Activated CD8-positive, alpha-beta memory T cell treated with anti-CD3 and anti-CD28 coated beads, Interleukin-2, amount 10 ng/mL, durations not matched to agents 7 days and 5 days (primary cell): ENCODE measurements at regions of chr12 and their contacts with region 1.

Region 1: GRCh38 chr12:93502802-93503623 is 35.7 kb downstream of the MRPL42 start:
- DNase-seq: peak; percentile 71
- ATAC-seq: peak; percentile 42
- H3K4me3 Mint-ChIP-seq: no peak overlapping the region
- H3K27ac Mint-ChIP-seq: no peak overlapping the region
- H3K4me1 Mint-ChIP-seq: peaks cover 17% of the 10 kb centered on the region
- H3K27me3 Mint-ChIP-seq: no peaks in the 10 kb centered on the region

Region 2: GRCh38 chr12:93638095-93638494 is 135.1 kb after region 1 on chr12:
- CTCF ChIA-PET with region 1: no interaction called
- DNase-seq: no peak
- ATAC-seq: no peak
- H3K4me3 Mint-ChIP-seq: no peak overlapping the region
- H3K27ac Mint-ChIP-seq: no peak overlapping the region
- H3K4me1 Mint-ChIP-seq: no peaks in the 10 kb centered on the region
- H3K27me3 Mint-ChIP-seq: peaks cover 33% of the 10 kb centered on the region

Region 3: DNA sequence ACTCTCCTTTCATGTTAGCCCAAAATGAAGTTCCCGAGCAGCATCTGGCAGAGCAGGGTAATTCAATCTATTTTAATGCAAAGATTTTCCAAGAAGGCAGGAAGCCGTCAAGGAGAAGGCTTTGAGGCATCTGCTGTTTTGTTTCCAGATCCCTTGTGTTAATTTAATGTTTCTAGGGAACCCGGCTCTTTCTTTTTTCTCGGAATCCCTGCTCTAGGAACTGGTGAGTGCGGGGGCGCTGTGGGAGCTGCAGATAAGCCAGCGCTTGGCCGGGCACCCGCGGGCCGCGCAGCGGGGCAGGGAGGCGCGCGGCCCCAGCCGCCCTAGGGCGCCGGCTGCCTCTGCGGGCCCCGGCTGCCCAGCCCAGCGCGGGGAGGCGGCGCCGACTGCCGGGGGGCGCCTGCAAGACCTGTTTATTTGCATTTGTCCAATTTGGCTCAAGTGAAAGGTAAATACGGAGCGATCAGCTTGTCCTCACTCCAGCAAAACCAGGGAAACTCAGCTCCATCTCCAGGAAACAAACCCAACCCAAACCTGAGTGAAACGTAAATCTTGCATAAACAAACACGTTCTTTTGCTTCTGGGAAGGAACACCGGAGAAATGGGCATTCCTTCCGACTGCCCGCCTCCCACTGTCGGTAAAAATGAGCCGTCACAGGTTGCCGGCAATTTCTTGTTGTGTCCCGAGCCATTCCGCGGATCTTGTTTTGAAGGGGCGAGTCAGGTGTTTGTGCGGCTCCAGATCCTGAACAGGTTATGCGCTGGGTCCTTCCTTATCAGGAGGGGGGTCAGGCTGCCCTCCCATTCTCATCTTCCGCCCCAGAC is 239.3 kb after region 1 on chr12:
- CTCF ChIA-PET with region 1: interaction called, 14 read pairs
- DNase-seq: peak; percentile 74
- ATAC-seq: peak; percentile 98
- H3K4me3 Mint-ChIP-seq: peak overlapping the region; percentile 83
- H3K27ac Mint-ChIP-seq: peak overlapping the region; percentile 90
- H3K4me1 Mint-ChIP-seq: peaks cover 25% of the 10 kb centered on the region
- H3K27me3 Mint-ChIP-seq: no peaks in the 10 kb centered on the region